Lower leg skin (tissue), 4 donors: ENCODE measurements at regions of chr16 and their contacts with region 1.

Region 1: GRCh38 chr16:57300387-57301125 is 16.1 kb upstream of the PLLP start:
- DNase-seq: peak; percentile 100
- H3K4me3 ChIP-seq: peak overlapping the region; percentile 18
- CTCF ChIP-seq: peak in 2 of 3 donors; percentile 49 to 99
- POLR2A ChIP-seq: no peak

Region 2: DNA sequence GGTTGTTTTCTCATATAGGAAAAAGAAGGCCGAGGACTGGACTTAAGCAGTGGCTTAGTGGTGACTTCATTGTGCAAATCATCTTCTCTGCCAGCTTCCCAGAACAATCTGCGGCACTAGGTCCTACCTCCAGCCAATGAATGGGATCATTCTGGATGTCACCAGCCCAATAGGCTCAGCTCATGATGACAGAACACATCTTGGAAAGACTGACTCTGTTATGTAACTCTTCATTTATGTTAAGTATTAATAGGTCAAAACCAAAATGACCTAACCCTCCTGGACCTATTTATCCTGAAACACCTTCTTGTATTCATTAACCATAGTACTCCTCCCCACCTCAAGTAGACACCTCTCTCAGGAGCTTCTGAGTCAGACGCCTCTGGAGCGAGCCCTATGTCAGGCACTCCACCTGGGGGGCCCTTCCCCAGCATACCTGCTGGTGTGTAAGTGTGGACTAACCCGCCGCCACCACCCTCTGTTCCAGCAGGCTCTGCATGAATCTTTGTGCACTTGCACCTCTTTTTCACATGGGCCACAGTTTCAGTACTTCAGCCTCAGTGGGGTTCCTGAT is 48.3 kb before region 1 on chr16:
- intact Hi-C with region 1: no loop called
- DNase-seq: no peak
- H3K4me3 ChIP-seq: no peak overlapping the region
- CTCF ChIP-seq: no peak
- POLR2A ChIP-seq: no peak

Region 3: GRCh38 chr16:57416122-57416509 is 115.6 kb after region 1 on chr16:
- intact Hi-C with region 1: loop called (anchors 2 kb)
- DNase-seq: no peak
- H3K4me3 ChIP-seq: no peak overlapping the region
- CTCF ChIP-seq: no peak
- POLR2A ChIP-seq: no peak

Region 4: DNA sequence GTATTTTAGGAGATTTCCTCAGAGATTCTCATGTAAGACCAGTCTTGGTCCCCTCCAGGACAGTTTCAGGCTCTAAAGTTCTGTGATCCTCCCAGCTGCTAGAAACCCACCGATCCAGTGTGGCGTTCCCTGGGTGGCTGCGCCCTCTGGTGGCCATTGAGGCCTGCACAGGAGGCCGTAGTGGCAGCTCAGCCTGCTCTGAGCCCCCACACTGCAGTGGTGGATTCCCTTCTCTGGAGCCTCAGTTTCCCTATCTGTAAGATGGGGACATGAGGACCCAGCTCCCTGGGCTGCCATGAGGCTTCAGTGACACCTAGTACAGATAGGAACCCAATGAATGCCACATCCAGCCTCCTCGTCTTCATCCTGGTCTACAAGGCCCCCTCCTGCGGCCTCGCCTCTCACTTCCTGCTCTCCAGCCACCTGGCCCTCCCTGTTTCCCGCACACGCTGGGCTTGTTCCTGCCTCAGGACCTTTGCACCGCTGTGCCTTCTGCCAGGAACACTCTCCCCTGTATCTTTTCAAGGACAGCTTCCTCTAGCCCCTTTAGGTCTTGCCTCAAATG is 219.3 kb after region 1 on chr16:
- intact Hi-C with region 1: loop called (anchors 5 kb)
- DNase-seq: peak; percentile 36 to 94
- H3K4me3 ChIP-seq: no peak overlapping the region
- CTCF ChIP-seq: peak in 1 of 3 donors; percentile 87
- POLR2A ChIP-seq: no peak